WTC11 (cell line): ENCODE measurements at regions of chr6 and their contacts with region 1.

Region 1: DNA sequence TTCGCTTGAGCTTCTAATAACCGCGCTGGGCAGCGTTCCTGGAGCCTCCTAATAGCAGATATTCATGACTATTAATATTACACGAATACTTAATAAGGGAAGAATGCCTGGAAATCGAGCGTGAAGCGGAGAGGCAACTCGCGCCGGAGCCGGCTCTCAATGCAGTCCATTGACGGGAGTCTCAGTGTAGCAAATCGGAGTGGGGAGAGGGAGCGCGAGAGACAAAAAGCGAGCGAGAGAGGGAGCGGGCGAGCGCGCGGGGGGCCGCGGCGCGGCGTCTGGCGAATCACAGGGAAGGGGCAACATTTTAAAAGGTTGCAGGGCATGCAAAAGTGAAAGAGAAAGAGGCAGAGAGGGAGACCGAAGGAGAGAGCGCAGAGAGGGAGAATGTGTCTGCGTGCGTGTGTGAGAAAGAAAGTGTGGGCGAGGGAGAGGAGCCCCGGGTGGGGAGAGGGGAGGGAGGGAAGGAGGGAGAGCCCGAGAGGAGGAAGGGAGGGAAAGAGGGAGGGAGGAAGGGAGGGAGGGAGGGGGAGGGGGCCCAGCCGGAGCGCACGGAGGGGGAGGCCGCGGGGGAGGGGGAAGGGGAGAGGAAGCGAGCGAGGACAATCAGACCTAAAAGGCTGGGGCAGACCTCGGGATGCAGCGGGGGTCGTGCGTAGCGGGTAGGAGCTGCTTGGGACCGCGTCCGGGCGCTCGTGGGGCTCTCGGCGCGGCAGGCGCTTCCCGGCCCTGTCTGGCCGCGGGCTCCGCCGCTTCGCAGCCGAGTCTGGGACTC is 2.7 kb downstream of the TFAP2A start:
- DNase-seq: peak; percentile 79
- ATAC-seq: peak; percentile 1
- H3K4me3 Mint-ChIP-seq: peak overlapping the region; percentile 85
- H3K27ac Mint-ChIP-seq: no peak overlapping the region
- H3K4me1 Mint-ChIP-seq: peaks cover 85% of the 10 kb centered on the region
- H3K27me3 Mint-ChIP-seq: peaks cover 95% of the 10 kb centered on the region
- CTCF ChIP-seq: no peak

Region 2: GRCh38 chr6:10381133-10381829 is 30.9 kb before region 1 on chr6:
- CTCF ChIA-PET with region 1: interaction called, 20 read pairs
- POLR2A ChIA-PET with region 1: interaction called, 3 read pairs
- DNase-seq: peak; percentile 61
- ATAC-seq: peak; percentile 70
- H3K4me3 Mint-ChIP-seq: peak overlapping the region; percentile 59
- H3K27ac Mint-ChIP-seq: no peak overlapping the region
- H3K4me1 Mint-ChIP-seq: peaks cover 48% of the 10 kb centered on the region
- H3K27me3 Mint-ChIP-seq: peaks cover 93% of the 10 kb centered on the region
- CTCF ChIP-seq: no peak

Region 3: GRCh38 chr6:10429638-10430427 is 17.7 kb after region 1 on chr6:
- CTCF ChIA-PET with region 1: interaction called, 54 read pairs
- POLR2A ChIA-PET with region 1: interaction called, 3 read pairs
- DNase-seq: no peak
- ATAC-seq: peak; percentile 37
- H3K4me3 Mint-ChIP-seq: no peak overlapping the region
- H3K27ac Mint-ChIP-seq: no peak overlapping the region
- H3K4me1 Mint-ChIP-seq: peaks cover 46% of the 10 kb centered on the region
- H3K27me3 Mint-ChIP-seq: peaks cover 65% of the 10 kb centered on the region
- CTCF ChIP-seq: peak; percentile 22; the same call in 1 of the 2 replicates

Region 4: DNA sequence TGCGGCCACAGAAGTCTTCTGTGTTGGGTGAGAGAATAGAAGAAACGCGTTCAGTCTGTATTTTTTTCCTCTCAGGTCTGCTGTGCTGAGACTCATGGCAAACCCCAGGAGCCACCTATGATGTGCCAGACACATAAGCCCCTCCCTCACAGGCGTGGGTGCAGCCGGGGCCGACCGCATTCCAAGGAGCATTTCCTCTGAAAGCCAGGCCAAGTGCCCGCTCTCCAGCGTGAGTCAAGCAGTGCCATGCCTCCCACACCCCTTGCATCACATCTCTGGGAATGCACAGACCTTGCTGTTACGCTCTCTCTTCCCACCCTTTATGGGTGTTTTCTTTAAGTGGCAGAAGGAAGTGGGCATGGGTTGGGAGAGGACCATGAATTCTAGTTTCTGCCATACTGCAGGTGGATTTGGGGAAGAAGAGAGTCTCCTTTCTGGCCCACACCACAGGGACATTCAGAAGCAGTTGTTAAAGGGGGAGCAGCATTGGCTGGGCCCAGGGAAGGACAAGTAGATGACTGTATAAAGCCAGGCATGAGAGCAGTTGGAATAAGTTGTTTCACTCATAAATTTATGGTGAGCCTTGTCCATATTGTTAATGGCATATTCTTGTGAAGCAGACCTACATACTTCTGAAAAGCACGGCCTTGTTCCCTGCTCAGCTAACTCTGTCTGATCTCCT is 39.8 kb after region 1 on chr6:
- CTCF ChIA-PET with region 1: no interaction called
- POLR2A ChIA-PET with region 1: no interaction called
- DNase-seq: no peak
- ATAC-seq: peak; percentile 59
- H3K4me3 Mint-ChIP-seq: no peak overlapping the region
- H3K27ac Mint-ChIP-seq: no peak overlapping the region
- H3K4me1 Mint-ChIP-seq: no peaks in the 10 kb centered on the region
- H3K27me3 Mint-ChIP-seq: no peaks in the 10 kb centered on the region
- CTCF ChIP-seq: no peak